ENCODE measurements at regions of chr17 and their contacts with region 1.

Region 1: DNA sequence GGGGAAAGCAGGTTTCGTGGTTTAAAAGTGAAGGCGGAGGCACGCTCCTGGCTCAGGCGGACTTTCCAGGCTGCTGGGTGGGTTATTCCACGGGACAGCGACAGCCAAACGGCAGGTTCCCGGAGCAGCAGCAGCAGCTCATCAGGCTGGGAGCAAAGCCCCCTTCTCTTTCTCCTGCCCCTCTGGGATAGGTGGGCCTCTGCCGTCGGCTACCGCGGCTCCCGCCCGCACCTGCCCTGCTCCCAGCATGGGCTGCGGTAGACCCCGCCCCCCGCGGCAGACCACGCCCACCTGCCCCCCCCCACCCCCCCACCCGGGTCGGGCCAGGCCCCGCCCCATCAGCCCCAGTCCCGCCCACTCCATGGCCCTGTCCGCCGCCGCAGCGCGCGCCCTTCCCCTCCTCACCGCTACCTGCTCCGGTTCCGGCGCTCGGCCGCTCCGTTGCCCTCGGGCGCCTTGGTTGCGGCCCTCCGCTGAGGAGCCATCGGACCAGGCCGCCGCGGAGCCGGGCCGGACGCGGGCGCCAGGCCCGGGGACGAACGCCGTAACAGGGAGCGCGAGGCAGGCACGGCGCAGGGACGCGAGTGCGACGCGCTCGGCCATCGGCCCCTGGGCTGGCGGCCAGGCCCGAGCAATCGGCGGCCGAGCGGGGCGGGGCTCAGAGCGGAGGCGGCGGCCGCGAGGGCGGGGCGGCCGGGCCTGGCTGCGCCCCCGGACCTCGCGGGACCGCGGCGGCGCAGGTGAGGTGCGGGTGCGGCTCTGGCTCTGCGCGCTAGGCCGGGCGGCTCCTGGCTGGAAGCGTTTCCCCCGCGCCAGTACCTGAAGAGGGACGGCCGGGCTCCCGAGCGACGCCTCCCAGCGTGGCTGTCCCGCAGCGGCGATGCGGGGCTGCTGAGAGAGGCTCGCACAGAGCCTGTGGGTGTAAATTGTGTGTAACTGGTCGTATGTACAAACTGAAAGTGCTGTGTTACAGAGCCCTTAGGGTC is at the starts of genes HEXD and OGFOD3:
- DNase-seq: peak; percentile 78 to 96 (median 92)
- ATAC-seq: peak; percentile 94
- H3K4me3 ChIP-seq: peak within 1 kb of the TSS; percentile 89
- H3K4me3 Mint-ChIP-seq: peak within 1 kb of the TSS; percentile 78 to 89 (median 84)
- H3K27ac ChIP-seq: peak within 1 kb of the TSS; percentile 94
- H3K27ac Mint-ChIP-seq: peak within 1 kb of the TSS; percentile 80 to 92 (median 86)
- H3K4me1 ChIP-seq: peaks cover 5 to 20% of the 10 kb centered on the region in 2 donors
- H3K4me1 Mint-ChIP-seq: peaks cover 23 to 42% (median 31%) of the 10 kb centered on the region in 7 donors
- H3K27me3 ChIP-seq: no peaks in the 10 kb centered on the region
- H3K27me3 Mint-ChIP-seq: no peaks in the 10 kb centered on the region
- total RNA-seq, gene HEXD: 62.7 to 153 (median 66.9) TPM
- total RNA-seq, gene OGFOD3: 21.9 to 34.6 (median 32.3) TPM

Region 2: GRCh38 chr17:82193520-82194220 is 224.6 kb before region 1 on chr17:
- CTCF ChIA-PET with region 1: no interaction called
- POLR2A ChIA-PET with region 1: no interaction called
- intact Hi-C with region 1: no loop called
- DNase-seq: peak in 1 of 9 donors; percentile 4
- ATAC-seq: peak; percentile 75
- H3K4me3 ChIP-seq: no peak overlapping the region
- H3K4me3 Mint-ChIP-seq: no peak overlapping the region
- H3K27ac ChIP-seq: no peak overlapping the region
- H3K27ac Mint-ChIP-seq: no peak overlapping the region
- H3K4me1 ChIP-seq: peaks cover 0 to 10% of the 10 kb centered on the region in 2 donors
- H3K4me1 Mint-ChIP-seq: peaks cover 9 to 20% (median 11%) of the 10 kb centered on the region in 7 donors
- H3K27me3 ChIP-seq: no peaks in the 10 kb centered on the region
- H3K27me3 Mint-ChIP-seq: no peaks in the 10 kb centered on the region

Region 3: GRCh38 chr17:82205719-82206508 is 212.4 kb before region 1 on chr17:
- CTCF ChIA-PET with region 1: no interaction called
- POLR2A ChIA-PET with region 1: no interaction called
- intact Hi-C with region 1: loop called in 1 of 2 experiments (anchors 1 kb)
- DNase-seq: peak; percentile 67 to 87 (median 82)
- ATAC-seq: peak; percentile 88
- H3K4me3 ChIP-seq: no peak overlapping the region
- H3K4me3 Mint-ChIP-seq: peak overlapping the region in 9 of 10 donors; percentile 45 to 71 (median 58)
- H3K27ac ChIP-seq: peak overlapping the region; percentile 64
- H3K27ac Mint-ChIP-seq: peak overlapping the region; percentile 87 to 98 (median 95)
- H3K4me1 ChIP-seq: peaks cover 14 to 22% of the 10 kb centered on the region in 2 donors
- H3K4me1 Mint-ChIP-seq: peaks cover 24 to 61% (median 43%) of the 10 kb centered on the region in 7 donors
- H3K27me3 ChIP-seq: no peaks in the 10 kb centered on the region
- H3K27me3 Mint-ChIP-seq: no peaks in the 10 kb centered on the region

Region 4: DNA sequence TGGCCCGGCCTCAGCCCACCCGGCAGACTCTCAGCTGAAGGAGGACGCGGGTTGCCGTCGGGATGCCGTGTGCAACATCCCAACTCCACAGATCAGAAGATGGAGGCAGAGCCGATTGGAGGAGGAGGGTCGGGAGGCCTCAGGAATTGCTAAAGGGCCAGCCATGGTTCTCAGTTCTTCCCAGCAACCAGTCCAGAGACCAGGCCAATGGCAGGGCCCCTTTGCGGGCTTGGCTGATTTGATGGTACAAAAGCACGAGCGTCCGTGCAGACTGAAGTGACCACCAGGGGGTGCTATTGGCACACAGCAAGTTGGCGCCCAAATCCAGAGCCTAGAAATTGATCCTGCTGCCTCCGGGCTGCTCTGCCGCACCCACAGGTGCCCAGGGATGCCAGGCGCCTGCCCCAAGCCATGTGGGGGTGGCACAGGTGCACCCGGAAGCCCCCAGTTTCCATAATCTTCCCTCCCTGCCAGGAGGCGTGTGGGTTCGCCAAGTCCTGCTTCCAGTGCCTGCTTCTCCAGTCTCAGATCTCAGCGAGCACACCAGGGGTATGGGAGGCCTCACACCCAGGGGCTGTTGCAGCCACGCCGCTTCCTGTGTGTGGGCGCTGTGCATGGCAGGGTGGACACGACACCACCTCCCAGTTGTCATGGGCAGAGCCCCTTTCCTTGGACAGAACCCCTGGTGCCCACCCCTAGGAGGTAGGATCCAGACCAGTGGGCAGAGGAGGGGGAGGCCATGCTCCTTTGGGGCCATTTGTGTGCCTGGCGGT is 66.4 kb before region 1 on chr17:
- CTCF ChIA-PET with region 1: interaction called, 6 read pairs
- POLR2A ChIA-PET with region 1: interaction called, 3 read pairs
- intact Hi-C with region 1: loop called (anchors 1 kb)
- DNase-seq: peak; percentile 59 to 84 (median 77)
- ATAC-seq: peak; percentile 91
- H3K4me3 ChIP-seq: no peak overlapping the region
- H3K4me3 Mint-ChIP-seq: peak overlapping the region in 1 of 10 donors; percentile 34
- H3K27ac ChIP-seq: no peak overlapping the region
- H3K27ac Mint-ChIP-seq: no peak overlapping the region
- H3K4me1 ChIP-seq: no peaks in the 10 kb centered on the region
- H3K4me1 Mint-ChIP-seq: peaks cover 0 to 7% (median under 1%) of the 10 kb centered on the region in 7 donors
- H3K27me3 ChIP-seq: no peaks in the 10 kb centered on the region
- H3K27me3 Mint-ChIP-seq: peaks cover 0 to 15% (median 5%) of the 10 kb centered on the region in 5 donors

Region 5: GRCh38 chr17:82366749-82367148 is 51.5 kb before region 1 on chr17:
- CTCF ChIA-PET with region 1: no interaction called
- POLR2A ChIA-PET with region 1: no interaction called
- intact Hi-C with region 1: no loop called
- DNase-seq: no peak
- ATAC-seq: no peak
- H3K4me3 ChIP-seq: no peak overlapping the region
- H3K4me3 Mint-ChIP-seq: no peak overlapping the region
- H3K27ac ChIP-seq: no peak overlapping the region
- H3K27ac Mint-ChIP-seq: no peak overlapping the region
- H3K4me1 ChIP-seq: peaks cover 0 to 7% of the 10 kb centered on the region in 2 donors
- H3K4me1 Mint-ChIP-seq: peaks cover 4 to 11% (median 9%) of the 10 kb centered on the region in 7 donors
- H3K27me3 ChIP-seq: peaks cover 3 to 5% of the 10 kb centered on the region in 2 donors
- H3K27me3 Mint-ChIP-seq: peaks cover 13 to 50% (median 23%) of the 10 kb centered on the region in 5 donors

Region 6: GRCh38 chr17:82494236-82495055 is 76.2 kb after region 1 on chr17:
- CTCF ChIA-PET with region 1: no interaction called
- POLR2A ChIA-PET with region 1: no interaction called
- intact Hi-C with region 1: loop called (anchors 1 to 2 kb)
- DNase-seq: peak; percentile 68 to 92 (median 80)
- ATAC-seq: peak; percentile 80
- H3K4me3 ChIP-seq: no peak overlapping the region
- H3K4me3 Mint-ChIP-seq: peak overlapping the region in 9 of 10 donors; percentile 14 to 84 (median 65)
- H3K27ac ChIP-seq: peak overlapping the region; percentile 28
- H3K27ac Mint-ChIP-seq: peak overlapping the region; percentile 77 to 94 (median 87)
- H3K4me1 ChIP-seq: peaks cover 0 to 9% of the 10 kb centered on the region in 2 donors
- H3K4me1 Mint-ChIP-seq: peaks cover 8 to 33% (median 25%) of the 10 kb centered on the region in 7 donors
- H3K27me3 ChIP-seq: no peaks in the 10 kb centered on the region
- H3K27me3 Mint-ChIP-seq: peaks cover 0 to 2% (median 0%) of the 10 kb centered on the region in 5 donors

Region 7: DNA sequence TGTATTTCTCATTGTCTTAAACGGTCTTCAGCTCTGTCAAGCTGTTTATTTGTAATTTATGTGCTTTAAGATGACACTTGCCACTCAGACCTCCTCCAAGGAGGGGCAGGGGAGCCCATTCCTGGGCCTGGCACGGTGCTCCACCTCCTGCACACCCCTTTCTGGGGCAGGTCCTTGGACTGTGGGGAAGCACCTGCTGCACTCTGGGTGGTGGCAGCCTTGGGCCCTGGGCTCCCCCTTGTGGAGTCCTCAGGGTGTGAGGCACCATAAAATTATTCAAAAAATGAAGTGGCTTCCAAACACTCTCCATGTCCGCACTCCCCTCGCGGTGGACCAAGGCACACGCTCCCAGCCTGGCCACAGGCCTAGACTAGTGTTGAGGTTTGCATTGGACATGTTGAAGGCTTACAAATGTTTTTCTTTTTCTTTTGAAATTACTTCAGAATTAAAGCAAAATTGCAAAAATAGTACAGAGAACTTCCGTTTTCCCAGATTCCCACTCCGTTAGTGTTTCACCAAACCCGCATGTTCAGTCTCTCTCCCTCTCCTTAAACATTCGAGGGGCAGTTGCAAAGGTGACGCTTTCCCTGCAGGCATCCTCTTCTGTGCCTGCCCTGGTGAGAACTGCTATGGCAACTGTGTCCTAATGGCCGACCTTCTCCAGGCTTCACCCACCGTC is 133.6 kb after region 1 on chr17:
- CTCF ChIA-PET with region 1: interaction called, 3 read pairs
- POLR2A ChIA-PET with region 1: interaction called, 4 read pairs
- intact Hi-C with region 1: loop called in 1 of 2 experiments (anchors 1 kb)
- DNase-seq: peak; percentile 61 to 83 (median 77)
- ATAC-seq: peak; percentile 99
- H3K4me3 ChIP-seq: no peak overlapping the region
- H3K4me3 Mint-ChIP-seq: peak overlapping the region in 3 of 10 donors; percentile 13 to 64 (median 27)
- H3K27ac ChIP-seq: no peak overlapping the region
- H3K27ac Mint-ChIP-seq: peak overlapping the region in 8 of 9 donors; percentile 32 to 86 (median 81)
- H3K4me1 ChIP-seq: peaks cover 3 to 18% of the 10 kb centered on the region in 2 donors
- H3K4me1 Mint-ChIP-seq: peaks cover 28 to 52% (median 37%) of the 10 kb centered on the region in 7 donors
- H3K27me3 ChIP-seq: no peaks in the 10 kb centered on the region
- H3K27me3 Mint-ChIP-seq: no peaks in the 10 kb centered on the region

Region 8: DNA sequence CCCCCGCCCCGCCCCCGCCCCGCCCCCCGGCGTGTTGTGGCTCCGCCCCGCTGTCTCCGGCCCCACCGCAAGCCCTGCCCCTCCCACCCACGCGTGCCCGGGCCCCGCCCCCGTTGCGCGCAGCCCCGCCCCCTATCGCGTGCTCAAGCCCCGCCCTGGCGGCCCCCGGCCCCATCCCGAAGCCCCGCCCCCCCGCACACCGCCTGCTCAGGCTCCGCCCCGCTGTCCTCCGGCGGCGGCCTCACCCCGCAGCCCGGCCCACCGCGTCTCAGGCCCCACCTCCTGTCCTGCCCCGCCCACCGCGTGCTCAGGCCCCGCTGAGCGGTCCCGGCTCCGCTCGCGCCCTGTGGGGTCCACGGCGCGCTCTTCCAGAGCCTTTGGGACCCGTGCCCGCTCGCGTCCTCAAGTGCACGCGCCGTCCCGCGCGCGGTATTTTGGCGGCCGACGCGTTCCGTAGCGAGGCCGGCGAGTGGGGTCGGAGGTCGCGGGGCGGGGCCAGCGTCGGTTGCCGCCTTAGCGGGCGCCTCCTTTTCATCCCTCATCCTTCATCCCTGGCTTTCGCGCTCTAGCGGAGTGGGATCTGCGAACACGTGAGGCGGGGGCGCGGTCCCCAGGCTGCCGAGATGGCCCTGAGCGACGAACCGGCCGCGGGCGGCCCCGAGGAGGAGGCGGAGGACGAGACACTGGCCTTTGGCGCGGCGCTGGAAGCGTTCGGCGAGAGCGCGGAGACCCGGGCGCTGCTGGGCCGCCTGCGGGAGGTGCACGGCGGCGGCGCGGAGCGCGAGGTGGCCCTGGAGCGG is 333.5 kb after region 1 on chr17 and contains the start of gene TBCD:
- CTCF ChIA-PET with region 1: no interaction called
- POLR2A ChIA-PET with region 1: no interaction called
- intact Hi-C with region 1: loop called in 1 of 2 experiments (anchors 2 kb)
- DNase-seq: peak; percentile 80 to 95 (median 90)
- ATAC-seq: peak; percentile 91
- H3K4me3 ChIP-seq: peak within 1 kb of the TSS; percentile 80
- H3K4me3 Mint-ChIP-seq: peak within 1 kb of the TSS; percentile 68 to 91 (median 80)
- H3K27ac ChIP-seq: peak within 1 kb of the TSS; percentile 74
- H3K27ac Mint-ChIP-seq: peak within 1 kb of the TSS in 7 of 9 donors; percentile 11 to 77 (median 58)
- H3K4me1 ChIP-seq: peaks cover 7 to 8% of the 10 kb centered on the region in 2 donors
- H3K4me1 Mint-ChIP-seq: peaks cover 18 to 34% (median 26%) of the 10 kb centered on the region in 7 donors
- H3K27me3 ChIP-seq: no peaks in the 10 kb centered on the region
- H3K27me3 Mint-ChIP-seq: no peaks in the 10 kb centered on the region
- total RNA-seq, gene TBCD: 99.2 to 255 (median 226) TPM

Measured in naive thymus-derived CD4-positive, alpha-beta T cell (primary cell).